Naive thymus-derived CD4-positive, alpha-beta T cell (primary cell): ENCODE measurements at regions of chr10 and their contacts with region 1.

Region 1: DNA sequence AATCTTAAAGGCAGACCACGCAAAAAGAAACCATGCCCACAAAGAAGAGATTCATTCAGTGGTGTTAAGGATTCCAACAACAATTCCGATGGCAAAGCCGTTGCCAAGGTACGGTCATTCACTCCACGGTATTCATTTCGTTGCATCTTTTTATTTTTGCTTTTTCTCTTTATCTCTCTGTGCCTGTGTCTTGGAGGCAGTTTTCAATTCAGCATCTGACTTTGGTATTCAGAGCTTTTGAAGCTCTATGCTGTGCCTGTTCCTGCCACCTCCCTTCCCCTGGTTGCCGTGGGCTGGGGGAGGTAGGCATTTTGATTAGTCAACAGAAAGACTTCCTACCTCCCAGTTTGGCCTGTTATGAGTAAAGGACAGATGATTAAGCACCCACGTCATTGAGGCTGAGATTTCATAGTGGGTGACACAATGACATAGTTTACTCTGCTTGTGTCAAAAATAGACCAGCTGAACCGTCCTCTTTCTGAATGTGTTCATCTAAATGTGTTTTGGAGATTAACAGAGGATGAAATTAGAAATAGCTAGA is 149.5 kb downstream of the ARID5B start:
- DNase-seq: peak; percentile 25 to 88 (median 78)
- ATAC-seq: peak; percentile 86
- H3K4me3 ChIP-seq: peak overlapping the region; percentile 62
- H3K4me3 Mint-ChIP-seq: peak overlapping the region; percentile 81 to 94 (median 88)
- H3K27ac ChIP-seq: peak overlapping the region; percentile 77
- H3K27ac Mint-ChIP-seq: peak overlapping the region; percentile 91 to 100 (median 96)
- H3K4me1 ChIP-seq: peaks cover 59 to 63% of the 10 kb centered on the region in 2 donors
- H3K4me1 Mint-ChIP-seq: peaks cover 60 to 99% (median 96%) of the 10 kb centered on the region in 7 donors
- H3K27me3 ChIP-seq: no peaks in the 10 kb centered on the region
- H3K27me3 Mint-ChIP-seq: no peaks in the 10 kb centered on the region

Region 2: DNA sequence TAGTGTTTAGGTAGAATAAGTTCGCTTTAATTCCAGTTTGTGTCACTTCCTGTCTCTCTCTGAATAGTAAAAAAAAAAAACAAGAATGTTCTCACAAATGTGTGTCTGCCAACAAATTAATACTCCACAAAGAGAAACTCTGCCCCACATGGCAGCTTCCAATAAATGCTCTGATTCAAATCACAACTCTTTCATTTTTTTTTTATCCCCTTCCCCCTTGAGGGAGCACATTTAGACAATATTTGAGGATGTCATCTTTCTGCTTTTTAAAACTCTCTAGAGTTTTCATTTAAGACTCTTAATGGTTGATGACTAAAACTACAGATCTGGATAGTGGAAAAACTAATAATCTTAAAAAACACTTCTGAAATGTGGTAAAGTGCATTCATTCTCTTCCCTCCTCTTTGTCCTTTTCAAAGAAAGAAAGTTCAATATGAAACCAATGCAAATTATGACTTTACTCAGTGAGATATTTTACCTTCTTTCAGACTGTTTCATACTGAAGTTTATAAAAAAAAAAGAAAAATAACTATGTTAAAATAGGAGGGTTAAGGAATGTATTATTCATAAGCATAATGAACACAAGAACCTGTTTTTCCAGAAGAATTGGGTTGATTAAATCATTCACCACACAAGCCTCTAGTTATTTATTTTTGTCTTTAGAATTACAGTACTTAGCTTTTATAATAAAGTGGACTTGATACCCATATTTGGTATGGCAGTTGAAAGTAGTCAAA is 107.1 kb before region 1 on chr10:
- CTCF ChIA-PET with region 1: no interaction called
- POLR2A ChIA-PET with region 1: interaction called, 3 read pairs
- intact Hi-C with region 1: loop called in 1 of 2 experiments (anchors 2 kb)
- DNase-seq: peak in 7 of 9 donors; percentile 25 to 58 (median 36)
- ATAC-seq: peak; percentile 65
- H3K4me3 ChIP-seq: peak overlapping the region; percentile 15
- H3K4me3 Mint-ChIP-seq: peak overlapping the region; percentile 60 to 86 (median 69)
- H3K27ac ChIP-seq: peak overlapping the region; percentile 58
- H3K27ac Mint-ChIP-seq: peak overlapping the region; percentile 47 to 94 (median 88)
- H3K4me1 ChIP-seq: peaks cover 28 to 46% of the 10 kb centered on the region in 2 donors
- H3K4me1 Mint-ChIP-seq: peaks cover 29 to 55% (median 51%) of the 10 kb centered on the region in 7 donors
- H3K27me3 ChIP-seq: no peaks in the 10 kb centered on the region
- H3K27me3 Mint-ChIP-seq: no peaks in the 10 kb centered on the region

Region 3: DNA sequence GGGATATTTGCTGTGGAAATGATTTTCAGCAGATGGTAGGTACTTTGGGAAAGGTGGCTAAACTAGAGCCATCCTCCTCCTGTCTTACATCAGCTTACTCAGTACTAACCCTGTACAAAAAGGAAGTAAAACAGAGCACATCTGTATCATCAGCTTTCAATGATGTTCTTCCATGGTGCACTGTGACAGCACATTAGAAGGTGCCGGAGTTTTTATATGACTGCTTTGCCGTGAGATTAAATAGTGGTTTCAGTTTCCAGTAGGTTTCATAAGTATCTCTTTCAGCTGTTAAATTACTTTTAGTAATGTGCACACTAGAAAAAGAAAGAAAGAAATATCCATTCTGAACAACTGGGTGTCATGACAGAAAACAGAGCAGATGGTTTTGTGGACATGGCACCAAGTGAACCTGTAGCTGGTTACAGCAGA is 63.0 kb before region 1 on chr10:
- CTCF ChIA-PET with region 1: no interaction called
- POLR2A ChIA-PET with region 1: interaction called, 3 read pairs
- intact Hi-C with region 1: loop called in 1 of 2 experiments (anchors 1 kb)
- DNase-seq: peak in 7 of 9 donors; percentile 3 to 49 (median 21)
- ATAC-seq: peak; percentile 78
- H3K4me3 ChIP-seq: no peak overlapping the region
- H3K4me3 Mint-ChIP-seq: peak overlapping the region; percentile 8 to 86 (median 62)
- H3K27ac ChIP-seq: peak overlapping the region; percentile 30
- H3K27ac Mint-ChIP-seq: peak overlapping the region; percentile 64 to 98 (median 80)
- H3K4me1 ChIP-seq: peaks cover 25 to 27% of the 10 kb centered on the region in 2 donors
- H3K4me1 Mint-ChIP-seq: peaks cover 43 to 79% (median 76%) of the 10 kb centered on the region in 7 donors
- H3K27me3 ChIP-seq: no peaks in the 10 kb centered on the region
- H3K27me3 Mint-ChIP-seq: no peaks in the 10 kb centered on the region

Region 4: GRCh38 chr10:62063795-62064472 is 13.0 kb after region 1 on chr10:
- CTCF ChIA-PET with region 1: interaction called, 3 read pairs
- POLR2A ChIA-PET with region 1: interaction called, 6 read pairs
- intact Hi-C with region 1: loop called (anchors 1 kb)
- DNase-seq: no peak
- ATAC-seq: no peak
- H3K4me3 ChIP-seq: no peak overlapping the region
- H3K4me3 Mint-ChIP-seq: peak overlapping the region in 4 of 10 donors; percentile 5 to 74 (median 51)
- H3K27ac ChIP-seq: peak overlapping the region; percentile 3
- H3K27ac Mint-ChIP-seq: peak overlapping the region in 8 of 9 donors; percentile 39 to 91 (median 60)
- H3K4me1 ChIP-seq: peaks cover 3 to 21% of the 10 kb centered on the region in 2 donors
- H3K4me1 Mint-ChIP-seq: peaks cover 19 to 88% (median 54%) of the 10 kb centered on the region in 7 donors
- H3K27me3 ChIP-seq: no peaks in the 10 kb centered on the region
- H3K27me3 Mint-ChIP-seq: no peaks in the 10 kb centered on the region

Region 5: GRCh38 chr10:62082729-62083411 is 31.9 kb after region 1 on chr10:
- CTCF ChIA-PET with region 1: interaction called, 3 read pairs
- POLR2A ChIA-PET with region 1: interaction called, 6 read pairs
- intact Hi-C with region 1: loop called (anchors 1 kb)
- DNase-seq: peak in 7 of 9 donors; percentile 23 to 70 (median 53)
- ATAC-seq: peak; percentile 83
- H3K4me3 ChIP-seq: peak overlapping the region; percentile 35
- H3K4me3 Mint-ChIP-seq: peak overlapping the region; percentile 46 to 79 (median 72)
- H3K27ac ChIP-seq: peak overlapping the region; percentile 63
- H3K27ac Mint-ChIP-seq: peak overlapping the region; percentile 69 to 92 (median 87)
- H3K4me1 ChIP-seq: peaks cover 23 to 41% of the 10 kb centered on the region in 2 donors
- H3K4me1 Mint-ChIP-seq: peaks cover 28 to 72% (median 58%) of the 10 kb centered on the region in 7 donors
- H3K27me3 ChIP-seq: no peaks in the 10 kb centered on the region
- H3K27me3 Mint-ChIP-seq: no peaks in the 10 kb centered on the region